ENCODE measurements at regions of chr2 and their contacts with region 1.

Region 1: GRCh38 chr2:152925547-152926327 is 207.3 kb downstream of the ARL6IP6 start:
- DNase-seq: peak; percentile 62
- H3K4me3 ChIP-seq: no peak overlapping the region
- H3K27ac ChIP-seq: peak overlapping the region; percentile 33
- H3K4me1 ChIP-seq: peaks cover 22% of the 10 kb centered on the region
- H3K27me3 ChIP-seq: no peaks in the 10 kb centered on the region
- CTCF ChIP-seq: peak; percentile 80 to 86

Region 2: DNA sequence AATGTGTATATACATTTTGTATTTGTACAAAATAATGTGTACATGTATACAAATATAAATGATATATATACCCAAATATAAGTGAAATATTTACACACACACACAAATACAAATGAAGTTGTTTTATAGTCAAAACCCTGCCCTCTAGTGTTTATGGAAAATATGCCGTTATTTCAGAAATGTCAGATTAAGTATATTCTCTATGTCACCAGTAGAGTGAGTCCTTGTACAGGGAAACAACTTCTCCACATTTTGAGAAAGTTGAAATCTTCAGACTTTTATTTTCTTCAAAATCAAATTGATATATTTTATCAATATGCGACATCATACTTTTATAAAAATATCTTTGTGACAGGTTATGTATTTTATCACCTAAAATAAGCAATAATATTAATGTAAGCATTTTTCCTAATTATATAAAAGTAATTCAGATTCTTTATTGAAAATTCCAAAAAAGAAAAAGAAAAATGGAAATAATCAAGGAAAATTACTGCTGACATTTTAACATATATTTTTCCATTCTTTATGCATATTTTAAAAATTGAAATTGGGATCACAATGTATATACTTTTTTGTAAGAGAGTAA is 184.9 kb before region 1 on chr2:
- CTCF ChIA-PET with region 1: no interaction called
- dilution Hi-C with region 1: no loop called
- in situ Hi-C with region 1: no loop called
- intact Hi-C with region 1: loop called (anchors 5 kb)
- DNase-seq: peak; percentile 43
- H3K4me3 ChIP-seq: no peak overlapping the region
- H3K27ac ChIP-seq: no peak overlapping the region
- H3K4me1 ChIP-seq: no peaks in the 10 kb centered on the region
- H3K27me3 ChIP-seq: no peaks in the 10 kb centered on the region
- CTCF ChIP-seq: peak; percentile 82 to 90

Region 3: DNA sequence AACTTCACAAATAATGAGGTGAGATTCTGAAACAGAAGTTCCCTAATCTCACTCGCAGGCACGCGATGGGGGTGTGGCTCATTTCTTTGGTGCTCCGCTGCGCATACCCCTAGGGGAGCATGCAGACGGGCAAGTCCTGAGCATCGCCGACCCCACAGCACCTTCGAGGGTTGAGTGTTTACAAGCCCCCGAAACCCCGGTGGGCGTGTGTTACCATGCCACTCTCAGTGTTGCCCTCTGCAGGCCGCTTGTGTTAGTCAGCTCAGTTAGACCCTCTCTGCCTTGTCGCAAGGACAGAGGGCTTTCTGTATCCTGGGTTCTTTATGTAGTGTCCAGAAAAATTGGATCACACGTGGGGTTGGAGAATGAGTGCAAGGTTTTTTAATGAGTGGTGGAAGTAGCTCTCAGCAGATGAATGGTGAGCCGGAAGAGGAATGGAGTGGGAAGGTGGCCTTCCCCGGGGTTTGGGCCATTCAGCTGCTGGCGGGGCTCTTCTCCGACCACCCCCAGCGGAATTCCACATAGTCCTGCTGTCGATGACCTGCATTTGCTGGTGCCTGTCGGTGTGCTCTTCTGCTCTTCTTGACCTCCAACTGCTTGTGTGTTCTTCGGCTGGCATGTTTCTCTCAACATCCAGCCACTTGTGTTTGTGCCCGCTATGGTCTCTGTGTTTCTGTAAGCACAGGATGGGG is 361.5 kb after region 1 on chr2:
- CTCF ChIA-PET with region 1: no interaction called
- dilution Hi-C with region 1: no loop called
- in situ Hi-C with region 1: no loop called
- intact Hi-C with region 1: loop called (anchors 5 kb)
- DNase-seq: no peak
- H3K4me3 ChIP-seq: no peak overlapping the region
- H3K27ac ChIP-seq: no peak overlapping the region
- H3K4me1 ChIP-seq: no peaks in the 10 kb centered on the region
- H3K27me3 ChIP-seq: no peaks in the 10 kb centered on the region
- CTCF ChIP-seq: no peak

Region 4: GRCh38 chr2:153478334-153479261 is 552.9 kb after region 1 on chr2 and contains the start of gene RPRM:
- CTCF ChIA-PET with region 1: interaction called, 5 read pairs
- dilution Hi-C with region 1: no loop called
- in situ Hi-C with region 1: no loop called
- intact Hi-C with region 1: loop called (anchors 1 kb)
- DNase-seq: peak; percentile 43
- H3K4me3 ChIP-seq: peak within 1 kb of the TSS in 2 of 3 experiments; percentile 40 to 44
- H3K27ac ChIP-seq: no peak within 1 kb of the TSS
- H3K4me1 ChIP-seq: peaks cover 6% of the 10 kb centered on the region
- H3K27me3 ChIP-seq: peaks cover 19% of the 10 kb centered on the region
- CTCF ChIP-seq: peak; percentile 76 to 77
- total RNA-seq, gene RPRM: 0.17 TPM in 1 of 2 donors, not detected in the other

Region 5: GRCh38 chr2:154375579-154375931 is 1449.8 kb after region 1 on chr2:
- CTCF ChIA-PET with region 1: no interaction called
- dilution Hi-C with region 1: no loop called
- in situ Hi-C with region 1: no loop called
- intact Hi-C with region 1: loop called (anchors 5 kb)
- DNase-seq: peak; percentile 28
- H3K4me3 ChIP-seq: no peak overlapping the region
- H3K27ac ChIP-seq: no peak overlapping the region
- H3K4me1 ChIP-seq: no peaks in the 10 kb centered on the region
- H3K27me3 ChIP-seq: no peaks in the 10 kb centered on the region
- CTCF ChIP-seq: peak; percentile 31 to 52

Measured in mammary epithelial cell (primary cell).